Calu3 (cell line): ENCODE measurements at regions of chr5 and their contacts with region 1.

Region 1: GRCh38 chr5:13987843-13988464 is 43.5 kb upstream of the DNAH5 start:
- DNase-seq: peak; percentile 70
- H3K4me3 Mint-ChIP-seq: no peak overlapping the region
- H3K27ac Mint-ChIP-seq: peak overlapping the region; percentile 48
- H3K4me1 Mint-ChIP-seq: peaks cover 40% of the 10 kb centered on the region
- H3K27me3 Mint-ChIP-seq: no peaks in the 10 kb centered on the region
- CTCF ChIP-seq: peak; percentile 76

Region 2: GRCh38 chr5:13944560-13945199 is 43.3 kb before region 1 on chr5 and contains the start of gene DNAH5:
- CTCF ChIA-PET with region 1: no interaction called
- intact Hi-C with region 1: no loop called
- DNase-seq: no peak
- H3K4me3 Mint-ChIP-seq: no peak within 1 kb of the TSS
- H3K27ac Mint-ChIP-seq: no peak within 1 kb of the TSS
- H3K4me1 Mint-ChIP-seq: no peaks in the 10 kb centered on the region
- H3K27me3 Mint-ChIP-seq: no peaks in the 10 kb centered on the region
- CTCF ChIP-seq: no peak
- total RNA-seq, gene DNAH5: 4.2 and 5.8 TPM in 2 replicates

Region 3: GRCh38 chr5:14035859-14036440 is 48.0 kb after region 1 on chr5:
- CTCF ChIA-PET with region 1: no interaction called
- intact Hi-C with region 1: loop called (anchors 1 kb)
- DNase-seq: peak; percentile 85
- H3K4me3 Mint-ChIP-seq: peak overlapping the region; percentile 49
- H3K27ac Mint-ChIP-seq: peak overlapping the region; percentile 99
- H3K4me1 Mint-ChIP-seq: peaks cover 68% of the 10 kb centered on the region
- H3K27me3 Mint-ChIP-seq: no peaks in the 10 kb centered on the region
- CTCF ChIP-seq: no peak

Region 4: DNA sequence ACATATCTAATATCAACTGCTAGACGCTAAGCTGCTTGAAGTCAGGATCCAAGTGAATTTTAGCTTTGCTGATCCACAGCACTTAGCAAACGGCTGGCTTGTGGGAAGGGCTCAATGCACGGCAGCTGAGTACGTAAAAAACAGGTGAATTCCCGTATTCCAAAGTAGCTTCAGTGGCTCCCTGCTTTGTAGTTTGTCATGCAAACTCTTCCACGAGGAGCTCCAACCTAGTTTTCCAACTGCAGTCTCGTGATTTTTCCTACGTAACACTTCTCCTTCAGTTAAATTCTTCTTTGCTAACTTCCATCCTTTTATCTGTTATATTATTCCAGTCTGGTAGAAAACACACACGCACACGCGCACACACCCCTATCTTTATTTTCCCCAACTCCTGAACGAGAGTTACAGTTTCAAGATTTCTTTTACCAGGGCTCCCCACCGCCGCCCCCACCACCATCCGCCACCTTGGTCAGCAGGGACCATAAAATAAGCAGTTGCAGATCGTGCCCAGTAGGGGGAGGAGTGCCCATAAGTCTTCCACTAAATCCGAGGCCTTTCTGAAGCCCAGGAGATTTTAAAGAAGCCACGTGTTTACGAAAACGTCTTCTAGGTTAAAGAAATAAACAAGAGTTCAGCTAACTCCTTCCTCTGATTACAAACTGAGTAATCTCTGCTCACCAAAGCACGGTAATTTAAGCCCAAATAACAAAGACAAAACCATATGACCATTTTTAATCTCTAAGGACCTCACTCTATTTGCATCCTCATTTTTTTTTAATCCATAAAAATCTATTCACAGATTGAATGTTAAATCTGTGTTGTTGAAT is 120.4 kb after region 1 on chr5:
- CTCF ChIA-PET with region 1: no interaction called
- intact Hi-C with region 1: loop called (anchors 5 kb)
- DNase-seq: peak; percentile 64
- H3K4me3 Mint-ChIP-seq: peak overlapping the region; percentile 1
- H3K27ac Mint-ChIP-seq: no peak overlapping the region
- H3K4me1 Mint-ChIP-seq: peaks cover 37% of the 10 kb centered on the region
- H3K27me3 Mint-ChIP-seq: no peaks in the 10 kb centered on the region
- CTCF ChIP-seq: peak; percentile 57

Region 5: GRCh38 chr5:14270209-14270702 is 282.3 kb after region 1 on chr5:
- CTCF ChIA-PET with region 1: interaction called, 5 read pairs
- intact Hi-C with region 1: loop called (anchors 2 kb)
- DNase-seq: peak; percentile 52
- H3K4me3 Mint-ChIP-seq: no peak overlapping the region
- H3K27ac Mint-ChIP-seq: peak overlapping the region; percentile 56
- H3K4me1 Mint-ChIP-seq: peaks cover 66% of the 10 kb centered on the region
- H3K27me3 Mint-ChIP-seq: no peaks in the 10 kb centered on the region
- CTCF ChIP-seq: peak; percentile 70